CD4-positive, alpha-beta memory T cell (primary cell): ENCODE measurements at regions of chr5 and their contacts with region 1.

Region 1: DNA sequence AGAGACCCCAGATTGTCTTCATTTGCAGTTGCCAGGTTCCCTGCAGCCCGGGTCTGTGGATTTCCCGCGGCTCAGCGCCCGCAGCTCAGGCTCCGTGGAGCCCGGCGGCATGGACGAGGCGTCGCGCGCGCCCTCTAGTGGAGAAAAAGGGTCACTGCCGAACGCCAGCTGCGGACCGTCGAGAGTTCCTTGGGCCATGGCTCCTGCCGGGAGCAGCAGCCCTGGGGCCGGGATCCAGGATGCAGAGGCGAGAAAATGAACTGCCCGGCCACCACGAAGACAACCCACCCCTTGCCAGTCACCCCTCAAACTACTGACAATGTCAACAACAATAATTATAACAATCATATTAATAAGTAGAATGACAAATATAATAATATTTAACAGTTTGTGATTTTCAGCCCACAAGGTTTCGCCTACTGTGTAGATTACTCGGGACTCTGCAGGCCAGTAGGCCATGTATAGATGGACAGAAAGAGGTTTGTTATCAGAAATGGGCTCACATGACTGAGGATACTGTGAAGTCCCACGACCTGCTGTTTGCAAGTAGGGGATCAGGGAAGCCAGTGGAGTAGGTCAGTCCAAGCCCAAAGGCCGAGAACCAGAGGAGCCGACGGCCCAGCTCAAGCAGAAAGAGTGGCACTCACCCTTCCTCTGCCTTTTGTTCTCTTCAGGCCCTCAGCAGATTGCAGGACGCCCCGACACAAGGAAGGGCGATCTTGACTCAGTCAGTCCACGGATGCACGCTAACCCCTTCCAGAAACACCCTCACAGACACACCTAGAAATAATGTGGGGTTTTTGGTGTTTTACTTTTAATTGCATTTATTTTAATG is 43.1 kb downstream of the BOD1 start:
- DNase-seq: peak; percentile 39 to 53 (median 50)
- H3K4me3 ChIP-seq: peak overlapping the region in 1 of 2 donors; percentile 19
- H3K4me3 Mint-ChIP-seq: peak overlapping the region in 2 of 8 donors; percentile 6
- H3K27ac ChIP-seq: no peak overlapping the region
- H3K27ac Mint-ChIP-seq: peak overlapping the region in 1 of 7 donors; percentile 20
- H3K4me1 ChIP-seq: peaks cover 4% of the 10 kb centered on the region
- H3K4me1 Mint-ChIP-seq: peaks cover 3 to 10% (median 6%) of the 10 kb centered on the region in 4 donors
- H3K27me3 ChIP-seq: peaks cover 5% of the 10 kb centered on the region
- H3K27me3 Mint-ChIP-seq: peaks cover 8 to 20% of the 10 kb centered on the region in 2 donors

Region 2: DNA sequence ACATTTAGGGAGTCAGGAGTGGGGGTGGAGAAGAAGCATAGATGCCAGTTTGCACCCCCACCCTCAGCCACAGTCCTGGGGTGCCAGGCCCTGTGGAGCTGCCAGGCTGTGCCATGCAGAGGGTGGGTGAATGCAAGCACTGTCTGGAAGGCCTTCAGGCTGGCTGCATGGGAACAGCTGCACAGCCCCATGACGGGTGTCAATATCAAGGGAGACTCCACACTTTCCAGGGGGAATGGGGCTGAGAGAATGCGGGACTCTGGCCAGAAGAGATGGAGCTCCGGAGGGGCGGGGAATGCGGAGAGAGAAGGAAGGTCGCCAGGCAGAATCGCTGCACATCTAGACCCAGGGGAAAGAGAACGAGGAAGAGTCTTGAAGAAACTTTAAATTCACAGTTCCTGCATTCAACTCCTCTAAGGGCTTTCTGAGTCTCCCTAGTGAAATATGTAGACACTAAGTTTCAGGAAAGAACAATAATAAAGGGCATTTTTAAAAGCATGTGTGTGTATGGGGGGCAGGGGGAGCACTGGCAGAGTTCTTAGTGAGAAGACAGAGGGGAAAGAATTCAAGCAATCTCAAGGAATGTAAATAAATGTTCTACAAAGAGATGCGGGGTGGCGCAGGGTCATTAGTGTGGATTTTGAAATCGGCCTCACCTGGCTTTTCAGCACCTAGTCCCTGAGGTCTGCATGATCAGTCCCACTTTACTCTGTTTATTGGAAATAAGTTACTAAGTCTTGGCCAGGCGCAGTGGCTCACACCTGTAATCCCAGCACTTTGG is 16.0 kb before region 1 on chr5:
- CTCF ChIA-PET with region 1: interaction called, 10 read pairs
- POLR2A ChIA-PET with region 1: no interaction called
- intact Hi-C with region 1: no loop called
- DNase-seq: no peak
- H3K4me3 ChIP-seq: no peak overlapping the region
- H3K4me3 Mint-ChIP-seq: no peak overlapping the region
- H3K27ac ChIP-seq: no peak overlapping the region
- H3K27ac Mint-ChIP-seq: no peak overlapping the region
- H3K4me1 ChIP-seq: no peaks in the 10 kb centered on the region
- H3K4me1 Mint-ChIP-seq: no peaks in the 10 kb centered on the region
- H3K27me3 ChIP-seq: no peaks in the 10 kb centered on the region
- H3K27me3 Mint-ChIP-seq: peaks cover 20 to 24% of the 10 kb centered on the region in 2 donors